PC-3 (cell line): ENCODE measurements at regions of chr11 and their contacts with region 1.

Region 1: GRCh38 chr11:94762208-94762607 is 5.9 kb upstream of the AMOTL1 start:
- DNase-seq: peak; percentile 88
- ATAC-seq: peak; percentile 95
- H3K4me3 ChIP-seq: no peak overlapping the region
- H3K27ac ChIP-seq: no peak overlapping the region
- H3K4me1 ChIP-seq: peaks cover 12% of the 10 kb centered on the region
- H3K27me3 ChIP-seq: no peaks in the 10 kb centered on the region
- CTCF ChIP-seq: peak; percentile 98

Region 2: DNA sequence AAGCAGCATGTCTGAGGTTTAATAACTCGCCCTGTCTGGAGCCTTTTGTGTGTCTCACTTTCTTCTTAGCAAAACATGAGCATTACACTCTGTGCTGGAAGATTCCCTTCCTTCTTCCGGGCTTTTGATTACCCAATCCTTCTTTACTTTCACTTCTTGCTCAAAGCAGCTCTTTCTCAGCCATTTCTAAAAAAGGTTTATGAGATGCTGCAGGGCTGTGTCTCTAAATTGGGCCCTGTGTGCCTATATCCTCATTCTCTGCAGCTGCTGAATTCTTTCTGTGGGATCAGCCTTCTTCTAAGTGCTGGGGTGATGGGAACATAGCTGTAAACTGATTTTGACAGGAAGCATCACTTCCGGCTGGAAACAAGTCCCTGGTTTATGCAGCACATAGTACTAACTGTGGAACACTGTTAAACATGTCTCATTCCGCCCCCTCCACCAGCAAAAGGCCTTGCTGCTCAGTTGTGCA is 123.3 kb before region 1 on chr11:
- CTCF ChIA-PET with region 1: no interaction called
- POLR2A ChIA-PET with region 1: no interaction called
- intact Hi-C with region 1: no loop called
- DNase-seq: no peak
- ATAC-seq: no peak
- H3K4me3 ChIP-seq: no peak overlapping the region
- H3K27ac ChIP-seq: no peak overlapping the region
- H3K4me1 ChIP-seq: no peaks in the 10 kb centered on the region
- H3K27me3 ChIP-seq: no peaks in the 10 kb centered on the region
- CTCF ChIP-seq: no peak

Region 3: DNA sequence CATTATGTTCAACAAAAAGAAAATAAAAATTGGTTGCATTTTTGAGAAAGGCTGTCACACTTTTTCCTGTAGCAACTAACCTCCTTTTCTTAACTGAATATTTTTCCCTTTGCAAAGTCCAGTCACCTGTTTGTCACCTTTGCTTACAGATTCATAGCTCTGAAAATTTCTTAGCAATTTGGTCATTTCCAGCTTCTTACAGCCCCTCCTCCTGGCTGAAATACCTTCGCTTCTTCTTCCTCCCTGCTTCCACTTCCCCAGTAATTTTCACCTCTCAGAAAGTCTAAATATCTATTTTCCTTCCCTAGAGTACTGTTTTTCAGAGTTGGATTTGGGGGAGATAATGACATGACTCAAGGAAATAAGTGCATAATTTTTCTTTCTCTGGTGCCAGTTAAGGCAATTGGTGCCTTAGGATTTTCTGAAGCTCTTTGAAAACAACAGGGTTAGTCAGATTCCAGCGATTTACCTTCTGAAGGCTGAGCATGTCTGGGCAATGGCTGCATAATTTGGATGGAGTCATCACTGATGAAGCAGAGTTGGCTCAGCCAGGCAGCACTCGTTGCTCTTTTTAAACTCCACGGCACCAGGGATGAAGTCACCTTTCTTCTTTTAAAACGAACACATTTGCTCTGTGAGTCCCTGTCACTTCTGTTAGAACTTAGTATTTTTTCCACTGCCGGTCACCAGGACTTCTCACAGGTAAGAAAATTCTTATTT is 56.2 kb before region 1 on chr11:
- CTCF ChIA-PET with region 1: no interaction called
- POLR2A ChIA-PET with region 1: no interaction called
- intact Hi-C with region 1: loop called (anchors 2 kb)
- DNase-seq: peak; percentile 74
- ATAC-seq: peak; percentile 36
- H3K4me3 ChIP-seq: peak overlapping the region; percentile 3; the same call in 1 of the 2 replicates
- H3K27ac ChIP-seq: peak overlapping the region; percentile 4; the same call in 1 of the 2 replicates
- H3K4me1 ChIP-seq: peaks cover 30% of the 10 kb centered on the region
- H3K27me3 ChIP-seq: no peaks in the 10 kb centered on the region
- CTCF ChIP-seq: 0 out of 2 replicates have a peak, but pooled peaks have one; percentile 10

Region 4: DNA sequence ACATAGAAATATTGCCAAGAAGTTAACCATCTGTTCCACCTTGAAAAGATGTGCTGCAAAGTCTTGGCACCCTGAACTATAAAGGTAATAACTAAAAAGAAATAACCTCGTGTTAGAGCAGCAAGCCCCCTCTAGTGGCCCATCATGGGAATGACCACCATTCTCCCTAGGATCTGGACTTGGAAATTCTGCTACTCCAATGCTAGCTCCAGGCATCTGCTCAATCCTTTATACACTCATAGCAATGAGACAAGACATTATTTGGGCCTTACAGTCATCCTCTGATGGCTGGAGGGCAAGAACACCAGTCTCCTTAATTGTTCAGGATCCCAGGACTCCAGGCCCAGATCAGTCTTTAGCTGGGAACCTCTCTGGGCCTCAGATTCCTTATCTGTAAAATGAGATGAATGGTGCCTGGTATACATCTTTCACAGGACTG is 135.1 kb after region 1 on chr11:
- CTCF ChIA-PET with region 1: no interaction called
- POLR2A ChIA-PET with region 1: no interaction called
- intact Hi-C with region 1: loop called (anchors 1 kb)
- DNase-seq: peak; percentile 78
- ATAC-seq: peak; percentile 73
- H3K4me3 ChIP-seq: no peak overlapping the region
- H3K27ac ChIP-seq: no peak overlapping the region
- H3K4me1 ChIP-seq: peaks cover 8% of the 10 kb centered on the region; the same call in 1 of the 2 replicates
- H3K27me3 ChIP-seq: no peaks in the 10 kb centered on the region
- CTCF ChIP-seq: peak; percentile 98